ENCODE measurements at regions of chr20 and their contacts with region 1.

Region 1: DNA sequence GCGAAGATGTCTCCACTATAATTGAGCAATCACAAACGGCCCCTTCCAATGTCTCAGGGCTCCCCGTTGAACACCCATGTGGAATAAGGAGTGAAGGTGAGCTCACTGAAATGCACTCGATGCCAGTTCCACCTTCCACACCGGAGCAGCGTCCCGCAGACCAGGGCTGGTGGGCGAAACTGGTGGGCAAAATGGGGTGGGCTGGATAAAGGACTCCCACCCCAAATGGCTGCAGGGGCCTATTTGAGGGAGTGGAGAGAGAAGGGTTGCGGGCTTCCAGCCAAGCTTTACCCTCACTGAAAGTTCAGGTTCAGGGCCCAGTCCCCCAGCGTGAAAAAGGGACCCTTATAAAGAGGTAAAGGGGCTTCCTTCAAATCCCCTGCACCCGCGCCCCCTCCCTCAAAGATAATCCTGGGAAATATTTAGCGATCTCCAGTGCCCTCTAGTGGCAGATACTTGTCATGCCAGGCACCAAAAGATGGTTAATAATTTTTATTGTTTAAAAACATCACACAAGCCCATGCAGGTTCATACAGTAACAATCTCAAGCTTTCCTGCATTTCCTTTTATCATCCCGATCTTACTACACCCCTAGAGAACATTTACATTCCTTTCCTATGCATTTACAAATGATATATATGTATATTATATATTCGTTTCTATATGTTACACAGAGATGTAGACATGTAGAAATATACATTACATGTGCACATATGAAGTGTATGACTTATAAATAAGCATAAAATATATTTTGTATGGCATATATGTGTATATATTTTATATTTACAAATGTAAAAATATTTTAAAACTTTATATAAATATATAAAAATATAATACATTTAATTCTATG is 58.2 kb upstream of the NKX2-2 start:
- DNase-seq: peak; percentile 33
- H3K4me3 Mint-ChIP-seq: no peak overlapping the region
- H3K27ac Mint-ChIP-seq: no peak overlapping the region
- H3K4me1 Mint-ChIP-seq: peaks cover 7% of the 10 kb centered on the region
- H3K27me3 Mint-ChIP-seq: peaks cover 29% of the 10 kb centered on the region

Region 2: DNA sequence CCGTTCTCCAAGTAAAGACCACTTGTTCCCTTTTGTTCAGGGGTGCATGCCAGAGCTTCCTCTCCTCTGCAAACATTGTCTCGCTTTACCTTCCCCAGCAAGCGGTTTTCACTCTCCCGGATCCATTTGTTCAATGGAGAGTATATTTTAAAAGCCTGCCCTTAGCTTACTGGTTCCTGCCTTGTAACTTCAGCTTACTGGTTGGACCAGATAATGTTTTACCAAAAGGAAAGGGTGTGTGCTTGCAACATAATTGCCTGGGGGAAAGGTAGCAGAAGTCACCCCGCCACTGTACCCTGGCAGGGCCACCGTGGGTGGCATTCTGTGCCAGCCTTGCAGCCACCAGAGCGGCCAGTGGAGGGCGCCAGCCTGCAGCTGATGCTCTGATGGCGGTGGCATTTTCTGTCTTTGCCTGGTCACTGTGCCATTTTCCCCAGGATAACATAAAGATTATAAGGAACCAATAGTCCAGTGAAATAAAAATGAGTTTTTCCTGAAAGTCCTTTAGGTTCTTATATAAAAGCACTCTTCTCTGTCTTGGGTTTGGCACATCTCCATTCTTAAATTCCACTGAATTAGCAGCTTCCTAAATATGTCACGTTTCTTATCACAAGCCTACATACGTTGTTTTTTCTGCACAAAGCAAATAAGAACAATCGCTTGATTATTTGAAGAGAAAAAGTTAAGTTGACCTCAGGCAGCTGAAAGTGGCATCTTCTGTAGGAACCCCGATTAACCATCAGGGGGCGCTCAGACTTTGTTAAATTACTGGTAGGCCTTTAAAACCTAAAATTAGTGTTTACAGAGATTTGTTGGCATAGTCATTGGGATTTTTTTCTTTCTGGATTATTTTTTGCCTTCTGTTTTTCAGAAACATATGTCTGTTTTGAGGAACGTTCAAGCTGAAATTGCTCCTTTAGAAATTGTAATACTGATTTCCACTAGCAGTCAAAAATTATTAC is 336.3 kb before region 1 on chr20:
- CTCF ChIA-PET with region 1: interaction called, 17 read pairs
- DNase-seq: peak; percentile 78
- H3K4me3 Mint-ChIP-seq: no peak overlapping the region
- H3K27ac Mint-ChIP-seq: no peak overlapping the region
- H3K4me1 Mint-ChIP-seq: peaks cover 2% of the 10 kb centered on the region
- H3K27me3 Mint-ChIP-seq: no peaks in the 10 kb centered on the region

Region 3: DNA sequence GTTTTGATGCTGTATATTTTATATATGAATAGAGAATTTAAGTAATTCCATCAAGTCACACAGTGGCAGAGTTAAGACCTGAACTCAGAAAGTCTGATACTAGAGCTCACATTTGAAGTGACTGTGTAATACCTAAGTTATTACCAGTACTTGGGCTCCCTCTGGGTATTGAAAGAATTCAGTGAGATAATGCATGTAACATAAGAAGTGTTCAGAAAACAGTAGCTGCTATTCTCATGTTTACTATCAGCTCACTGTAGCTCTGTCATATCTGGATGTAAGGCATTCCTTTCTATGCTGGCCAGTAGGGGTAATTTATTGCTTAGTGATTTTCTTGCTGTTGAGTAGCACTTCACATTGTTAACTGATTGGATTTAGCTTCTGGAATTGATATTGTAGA is 219.4 kb before region 1 on chr20:
- CTCF ChIA-PET with region 1: no interaction called
- DNase-seq: no peak
- H3K4me3 Mint-ChIP-seq: no peak overlapping the region
- H3K27ac Mint-ChIP-seq: no peak overlapping the region
- H3K4me1 Mint-ChIP-seq: no peaks in the 10 kb centered on the region
- H3K27me3 Mint-ChIP-seq: no peaks in the 10 kb centered on the region

Region 4: GRCh38 chr20:21523895-21524294 is 48.2 kb before region 1 on chr20:
- CTCF ChIA-PET with region 1: interaction called, 70 read pairs
- DNase-seq: no peak
- H3K4me3 Mint-ChIP-seq: no peak overlapping the region
- H3K27ac Mint-ChIP-seq: peak overlapping the region; percentile 0
- H3K4me1 Mint-ChIP-seq: peaks cover 4% of the 10 kb centered on the region
- H3K27me3 Mint-ChIP-seq: peaks cover 84% of the 10 kb centered on the region

Region 5: GRCh38 chr20:21529863-21530262 is 42.2 kb before region 1 on chr20:
- CTCF ChIA-PET with region 1: interaction called, 70 read pairs
- DNase-seq: no peak
- H3K4me3 Mint-ChIP-seq: no peak overlapping the region
- H3K27ac Mint-ChIP-seq: no peak overlapping the region
- H3K4me1 Mint-ChIP-seq: no peaks in the 10 kb centered on the region
- H3K27me3 Mint-ChIP-seq: peaks cover 35% of the 10 kb centered on the region

Region 6: DNA sequence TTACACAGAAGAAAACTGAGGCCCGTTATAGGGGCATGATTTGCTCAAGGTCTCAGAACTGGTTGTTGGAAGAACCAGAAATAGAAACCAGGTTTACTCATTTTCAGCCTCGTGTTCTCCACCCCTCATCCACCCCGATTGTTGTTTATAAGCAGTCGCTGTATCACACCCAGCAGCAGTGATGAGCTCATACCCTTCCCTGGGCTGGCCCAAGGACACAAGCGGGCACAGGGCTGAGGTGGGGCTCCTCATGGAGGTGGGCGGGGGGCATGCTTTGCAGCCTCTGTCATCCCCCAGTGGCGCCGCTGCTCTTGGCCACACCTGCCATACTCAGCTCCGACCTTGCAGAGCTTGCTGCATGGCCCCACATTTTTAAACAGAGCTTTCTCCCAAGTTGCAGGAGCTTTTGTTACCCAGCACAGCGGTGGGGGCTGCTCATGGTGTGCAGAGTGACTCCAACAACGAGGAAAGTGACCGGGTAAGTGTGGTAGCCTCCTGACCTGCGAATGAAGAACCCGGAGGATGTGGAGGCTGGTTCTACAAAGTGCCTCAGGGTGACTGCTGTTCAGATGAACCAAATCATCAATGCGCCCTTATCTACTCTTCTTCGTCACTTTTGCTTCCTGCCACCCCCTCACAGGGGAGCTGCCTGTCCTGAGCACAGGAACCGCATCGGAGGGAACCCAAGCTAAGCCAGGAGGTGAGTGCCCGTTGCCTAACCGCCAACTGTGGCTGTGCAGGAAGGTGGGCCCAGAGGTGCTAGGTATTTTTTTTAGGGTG is 14.6 kb before region 1 on chr20:
- CTCF ChIA-PET with region 1: interaction called, 21 read pairs
- DNase-seq: peak; percentile 26
- H3K4me3 Mint-ChIP-seq: peak overlapping the region; percentile 50
- H3K27ac Mint-ChIP-seq: peak overlapping the region; percentile 83
- H3K4me1 Mint-ChIP-seq: peaks cover 25% of the 10 kb centered on the region
- H3K27me3 Mint-ChIP-seq: peaks cover 12% of the 10 kb centered on the region

Region 7: GRCh38 chr20:21615617-21616080 is 43.6 kb after region 1 on chr20:
- CTCF ChIA-PET with region 1: interaction called, 11 read pairs
- DNase-seq: peak; percentile 61
- H3K4me3 Mint-ChIP-seq: no peak overlapping the region
- H3K27ac Mint-ChIP-seq: no peak overlapping the region
- H3K4me1 Mint-ChIP-seq: no peaks in the 10 kb centered on the region
- H3K27me3 Mint-ChIP-seq: peaks cover 18% of the 10 kb centered on the region